Naive thymus-derived CD8-positive, alpha-beta T cell (primary cell): ENCODE measurements at regions of chr11 and their contacts with region 1.

Region 1: DNA sequence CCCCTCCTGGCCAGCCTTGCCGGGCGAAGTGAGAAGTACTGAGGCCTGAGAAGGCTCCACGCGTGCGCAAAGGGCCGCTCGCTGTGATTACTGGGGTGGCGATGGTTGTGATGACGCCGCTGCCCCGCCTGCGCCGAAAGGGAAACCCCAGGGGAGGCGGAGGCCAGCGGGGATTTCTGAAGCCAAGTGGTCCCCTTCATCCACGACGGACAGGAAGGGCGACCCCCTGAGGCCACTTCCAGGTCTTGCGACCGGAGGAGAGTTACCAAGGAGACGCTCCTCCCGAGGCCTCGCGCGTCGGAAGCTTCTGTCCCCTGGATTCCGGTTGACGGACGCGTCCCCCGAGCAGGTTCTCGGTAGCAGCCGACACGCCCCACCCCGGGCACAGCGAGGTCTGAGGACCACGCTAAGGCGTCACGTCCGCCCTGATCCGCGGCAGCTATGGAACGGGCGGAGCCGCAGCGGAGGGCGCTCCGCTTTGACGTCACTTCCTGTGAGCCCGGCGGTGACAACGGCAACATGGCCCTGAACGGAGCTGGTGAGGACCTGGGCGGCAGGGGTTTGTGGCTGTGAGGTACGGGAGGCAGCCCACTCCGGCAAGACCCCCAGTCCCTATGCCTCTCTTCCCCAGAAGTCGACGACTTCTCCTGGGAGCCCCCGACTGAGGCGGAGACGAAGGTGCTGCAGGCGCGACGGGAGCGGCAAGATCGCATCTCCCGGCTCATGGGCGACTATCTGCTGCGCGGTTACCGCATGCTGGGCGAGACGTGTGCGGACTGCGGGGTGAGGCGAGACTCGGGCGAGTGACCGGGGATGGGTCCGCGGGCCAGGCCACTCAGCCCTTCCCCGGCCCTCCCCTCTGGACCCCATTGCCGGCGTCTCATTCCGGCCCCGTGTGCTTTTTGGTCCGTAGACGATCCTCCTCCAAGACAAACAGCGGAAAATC is at the start of gene ZNRD2:
- DNase-seq: peak; percentile 95 to 99 (median 98)
- ATAC-seq: peak; percentile 64 to 78
- H3K4me3 Mint-ChIP-seq: peak within 1 kb of the TSS; percentile 97 to 100 (median 99)
- H3K27ac Mint-ChIP-seq: peak within 1 kb of the TSS; percentile 94 to 100 (median 99)
- H3K4me1 Mint-ChIP-seq: peaks cover 38 to 88% (median 75%) of the 10 kb centered on the region in 4 donors
- H3K27me3 Mint-ChIP-seq: no peaks in the 10 kb centered on the region
- polyA plus RNA-seq, gene ZNRD2: 62.9 to 86.3 (median 80.1) TPM

Region 2: DNA sequence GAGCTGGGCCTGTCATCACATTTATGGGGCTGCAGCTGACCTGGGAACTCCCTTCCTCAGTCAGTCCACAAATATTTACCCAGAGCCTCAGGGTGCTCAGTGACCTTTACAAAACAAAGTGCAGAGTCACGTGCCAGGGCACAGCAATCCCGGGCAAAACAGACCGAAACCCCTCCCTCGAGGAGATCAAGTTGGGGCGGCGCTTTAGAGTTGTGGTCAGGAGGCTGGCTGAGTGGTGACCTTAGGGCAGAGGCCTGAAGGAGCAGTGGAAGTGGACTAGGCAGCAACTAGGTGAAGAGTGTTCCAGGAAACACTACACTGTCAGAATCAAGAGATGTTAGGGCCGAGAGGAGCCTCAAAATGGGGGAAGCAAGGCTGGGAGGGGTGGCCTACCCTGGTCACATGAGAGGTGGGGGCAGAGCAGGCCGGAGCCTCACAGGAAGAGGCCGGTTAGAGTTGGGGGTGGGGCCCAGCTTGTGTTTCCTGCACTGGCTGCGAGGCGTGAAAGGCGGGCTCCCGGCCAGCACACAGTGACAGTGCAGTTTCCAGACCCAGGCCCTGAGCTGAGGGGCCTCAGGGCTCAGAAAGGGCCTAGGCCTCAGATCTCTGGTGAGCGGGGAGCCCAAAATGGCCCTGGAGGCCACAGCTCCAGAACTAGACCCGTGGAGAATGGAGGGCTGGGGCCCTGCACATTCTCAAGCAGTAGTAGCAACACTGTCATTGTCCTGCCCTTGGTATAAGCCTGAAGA is 151.4 kb before region 1 on chr11:
- POLR2A ChIA-PET with region 1: interaction called, 23 read pairs
- DNase-seq: peak in 9 of 10 donors; percentile 30 to 89 (median 53)
- ATAC-seq: peak in 1 of 2 donors; percentile 7
- H3K4me3 Mint-ChIP-seq: peak overlapping the region; percentile 89 to 98 (median 96)
- H3K27ac Mint-ChIP-seq: peak overlapping the region; percentile 94 to 100 (median 99)
- H3K4me1 Mint-ChIP-seq: peaks cover 38 to 72% (median 58%) of the 10 kb centered on the region in 4 donors
- H3K27me3 Mint-ChIP-seq: peaks cover 0 to 4% (median 0%) of the 10 kb centered on the region in 5 donors

Region 3: GRCh38 chr11:65524741-65525545 is 45.3 kb before region 1 on chr11 and contains the start of gene SCYL1:
- POLR2A ChIA-PET with region 1: interaction called, 37 read pairs
- DNase-seq: peak; percentile 68 to 91 (median 80)
- ATAC-seq: peak; percentile 64 to 73
- H3K4me3 Mint-ChIP-seq: peak within 1 kb of the TSS; percentile 77 to 96 (median 88)
- H3K27ac Mint-ChIP-seq: peak within 1 kb of the TSS; percentile 90 to 99 (median 95)
- H3K4me1 Mint-ChIP-seq: peaks cover 36 to 66% (median 61%) of the 10 kb centered on the region in 4 donors
- H3K27me3 Mint-ChIP-seq: no peaks in the 10 kb centered on the region
- polyA plus RNA-seq, gene SCYL1: 23.2 to 41.5 (median 33.5) TPM

Region 4: DNA sequence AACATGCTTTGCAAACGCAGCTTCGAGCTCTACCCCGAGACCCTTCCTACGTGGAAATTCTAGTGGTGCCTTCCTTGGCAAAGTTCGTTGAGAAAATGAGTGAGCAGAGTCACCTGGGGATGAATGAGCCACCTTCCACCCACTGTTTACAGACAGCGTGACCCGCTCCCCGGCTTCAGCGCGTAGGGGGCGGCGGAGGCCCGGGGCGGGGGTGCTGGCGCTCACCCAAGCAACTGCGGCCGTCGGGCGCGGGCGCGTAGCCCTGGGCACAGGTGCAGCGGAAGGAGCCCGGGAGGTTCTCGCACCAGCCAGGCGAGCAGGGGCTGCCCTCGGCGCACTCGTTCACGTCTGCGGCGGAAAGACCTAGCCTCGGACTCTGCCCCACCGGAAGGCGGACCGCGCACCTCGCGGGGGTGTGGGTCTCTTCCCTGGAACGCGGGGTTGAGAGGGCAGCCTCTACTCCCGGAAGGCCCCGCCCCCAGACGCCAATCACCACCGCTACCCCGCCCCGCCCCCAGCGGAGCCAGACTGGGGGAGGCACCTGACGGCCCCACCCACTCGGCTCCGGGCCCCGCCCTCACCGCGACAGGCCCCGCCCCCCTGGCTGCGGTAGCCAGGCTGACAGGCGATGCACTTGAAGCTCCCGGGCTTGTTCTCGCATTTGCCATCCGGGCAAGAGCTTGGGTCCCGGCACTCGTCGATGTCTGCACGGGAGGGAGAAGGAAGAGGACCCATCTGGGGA is 23.9 kb before region 1 on chr11:
- POLR2A ChIA-PET with region 1: interaction called, 260 read pairs
- DNase-seq: peak; percentile 95 to 100 (median 98)
- ATAC-seq: peak; percentile 82
- H3K4me3 Mint-ChIP-seq: peak overlapping the region; percentile 77 to 89 (median 83)
- H3K27ac Mint-ChIP-seq: peak overlapping the region; percentile 53 to 99 (median 96)
- H3K4me1 Mint-ChIP-seq: peaks cover 32 to 75% (median 64%) of the 10 kb centered on the region in 4 donors
- H3K27me3 Mint-ChIP-seq: no peaks in the 10 kb centered on the region

Region 5: GRCh38 chr11:65558002-65558931 is 12.0 kb before region 1 on chr11 and contains the start of gene LTBP3:
- POLR2A ChIA-PET with region 1: interaction called, 118 read pairs
- DNase-seq: peak in 6 of 10 donors; percentile 45 to 54 (median 50)
- ATAC-seq: peak; percentile 46 to 56
- H3K4me3 Mint-ChIP-seq: peak within 1 kb of the TSS; percentile 82 to 95 (median 91)
- H3K27ac Mint-ChIP-seq: peak within 1 kb of the TSS; percentile 88 to 98 (median 94)
- H3K4me1 Mint-ChIP-seq: peaks cover 37 to 66% (median 60%) of the 10 kb centered on the region in 4 donors
- H3K27me3 Mint-ChIP-seq: no peaks in the 10 kb centered on the region
- polyA plus RNA-seq, gene LTBP3: 7.3 to 35.0 (median 18.9) TPM

Region 6: GRCh38 chr11:65615229-65615941 is 45.1 kb after region 1 on chr11 and contains the start of gene PCNX3:
- POLR2A ChIA-PET with region 1: interaction called, 51 read pairs
- DNase-seq: peak; percentile 97 to 100 (median 100)
- ATAC-seq: peak; percentile 86 to 89
- H3K4me3 Mint-ChIP-seq: peak within 1 kb of the TSS; percentile 94 to 99 (median 96)
- H3K27ac Mint-ChIP-seq: peak within 1 kb of the TSS; percentile 94 to 99 (median 97)
- H3K4me1 Mint-ChIP-seq: peaks cover 22 to 55% (median 52%) of the 10 kb centered on the region in 4 donors
- H3K27me3 Mint-ChIP-seq: peaks cover 0 to 2% (median 0%) of the 10 kb centered on the region in 5 donors
- polyA plus RNA-seq, gene PCNX3: 0.96 to 6.5 (median 2.2) TPM

Region 7: DNA sequence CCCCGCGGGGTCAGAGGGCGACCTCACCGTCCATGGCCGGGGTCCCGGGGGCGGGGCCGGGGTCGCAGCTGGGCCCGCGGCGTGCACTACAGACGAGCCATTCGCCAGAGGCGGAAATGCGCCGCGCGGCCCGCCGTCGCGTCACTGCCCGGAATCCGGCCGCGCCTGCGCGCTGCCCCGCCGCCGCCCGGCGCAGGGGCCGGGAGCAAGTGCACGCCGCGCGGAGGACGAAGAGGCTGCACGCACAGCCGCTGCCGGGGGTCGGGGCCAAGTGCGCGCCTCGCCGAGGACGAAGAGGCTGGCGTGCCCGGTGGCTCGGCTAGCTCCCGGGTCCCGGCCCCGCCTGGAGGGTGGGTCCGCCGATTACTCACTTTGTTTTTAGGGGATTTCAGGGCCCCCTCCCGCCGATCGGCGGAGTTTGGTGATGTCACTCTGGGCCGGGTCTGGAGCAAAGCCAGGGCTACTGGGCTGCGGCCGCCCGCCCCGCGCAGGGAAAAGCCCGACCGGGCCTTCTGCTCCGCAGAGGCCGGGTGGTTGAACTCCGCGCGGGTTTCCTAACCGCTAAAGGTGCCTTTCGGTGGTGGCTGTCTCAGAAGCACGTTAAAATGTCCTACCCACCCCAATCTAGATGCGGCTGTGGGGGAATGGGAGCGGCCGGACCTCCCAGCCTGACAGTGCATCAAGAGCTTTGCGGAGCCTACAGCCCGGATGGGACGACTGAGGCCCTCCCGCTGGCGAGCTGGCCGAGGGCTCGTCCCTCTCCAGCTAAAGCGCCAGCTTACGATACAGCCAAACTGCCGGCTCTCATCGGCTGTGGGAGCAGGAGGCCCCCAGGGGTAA is 92.8 kb after region 1 on chr11 and contains the start of gene RELA:
- POLR2A ChIA-PET with region 1: interaction called, 10 read pairs
- DNase-seq: peak; percentile 85 to 95 (median 88)
- ATAC-seq: peak; percentile 80 to 84
- H3K4me3 Mint-ChIP-seq: peak within 1 kb of the TSS; percentile 86 to 93 (median 88)
- H3K27ac Mint-ChIP-seq: peak within 1 kb of the TSS; percentile 91 to 98 (median 95)
- H3K4me1 Mint-ChIP-seq: peaks cover 16 to 47% (median 36%) of the 10 kb centered on the region in 4 donors
- H3K27me3 Mint-ChIP-seq: no peaks in the 10 kb centered on the region
- polyA plus RNA-seq, gene RELA: 38.4 to 69.8 (median 56.6) TPM

Region 8: DNA sequence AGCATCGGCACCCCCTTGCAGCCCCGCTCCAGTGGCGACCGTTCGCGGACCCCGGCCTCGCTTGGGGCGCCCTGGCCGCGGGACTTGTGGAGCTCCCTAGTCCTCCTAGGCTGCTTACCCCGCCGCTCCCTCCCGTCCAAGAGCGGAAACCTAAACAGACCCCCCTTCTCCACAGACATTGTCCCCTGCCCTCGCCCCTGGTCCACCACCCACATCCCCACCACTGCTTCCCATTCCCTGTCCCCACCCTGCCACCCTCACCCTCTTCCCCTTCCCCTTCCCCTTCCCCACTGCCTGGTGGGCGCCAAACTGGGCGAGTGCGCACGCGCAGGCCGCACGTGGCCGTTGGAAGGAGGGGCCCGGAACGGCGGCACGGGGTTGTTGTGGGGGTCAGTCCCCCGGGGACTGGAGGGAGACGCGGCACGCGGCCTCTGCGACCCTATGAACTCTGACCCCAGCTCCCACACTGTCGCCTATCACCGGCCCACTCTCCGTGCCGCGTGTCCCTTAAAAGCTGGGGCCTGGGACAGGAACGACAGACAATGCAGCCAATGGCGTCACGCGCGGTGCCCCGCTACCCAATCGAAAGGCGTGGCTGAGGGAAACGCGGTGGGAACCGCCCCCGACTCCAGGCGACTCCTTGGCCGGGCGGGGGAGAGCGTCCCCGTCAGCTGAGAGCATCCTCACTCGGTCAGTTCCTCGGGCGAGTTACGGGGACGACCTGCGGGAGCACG is 263.2 kb after region 1 on chr11 and contains the start of gene SNX32:
- POLR2A ChIA-PET with region 1: no interaction called
- DNase-seq: peak; percentile 89 to 97 (median 92)
- ATAC-seq: peak; percentile 99
- H3K4me3 Mint-ChIP-seq: no peak within 1 kb of the TSS
- H3K27ac Mint-ChIP-seq: peak within 1 kb of the TSS in 1 of 10 donors; percentile 67
- H3K4me1 Mint-ChIP-seq: peaks cover 8 to 16% (median 12%) of the 10 kb centered on the region in 4 donors
- H3K27me3 Mint-ChIP-seq: no peaks in the 10 kb centered on the region
- polyA plus RNA-seq, gene SNX32: 0.39 to 1.5 (median 0.40) TPM